Aorta (tissue), 5 donors: ENCODE measurements at regions of chr10 and their contacts with region 1.

Region 1: GRCh38 chr10:58781873-58782488 is 269.3 kb downstream of the BICC1 start:
- DNase-seq: no peak
- ATAC-seq: peak; percentile 54
- H3K4me3 ChIP-seq: no peak overlapping the region
- H3K27ac ChIP-seq: no peak overlapping the region
- H3K4me1 ChIP-seq: no peaks in the 10 kb centered on the region
- H3K27me3 ChIP-seq: no peaks in the 10 kb centered on the region

Region 2: GRCh38 chr10:58414270-58415041 is 367.5 kb before region 1 on chr10:
- intact Hi-C with region 1: loop called in 1 of 2 experiments (anchors 10 kb)
- DNase-seq: no peak
- ATAC-seq: peak; percentile 78
- H3K4me3 ChIP-seq: no peak overlapping the region
- H3K27ac ChIP-seq: no peak overlapping the region
- H3K4me1 ChIP-seq: no peaks in the 10 kb centered on the region
- H3K27me3 ChIP-seq: no peaks in the 10 kb centered on the region

Region 3: GRCh38 chr10:58577437-58577777 is 204.6 kb before region 1 on chr10:
- intact Hi-C with region 1: no loop called
- DNase-seq: no peak
- ATAC-seq: peak; percentile 75
- H3K4me3 ChIP-seq: no peak overlapping the region
- H3K27ac ChIP-seq: peak overlapping the region; percentile 2 to 23
- H3K4me1 ChIP-seq: peaks cover 5 to 6% of the 10 kb centered on the region in 2 donors
- H3K27me3 ChIP-seq: no peaks in the 10 kb centered on the region

Region 4: DNA sequence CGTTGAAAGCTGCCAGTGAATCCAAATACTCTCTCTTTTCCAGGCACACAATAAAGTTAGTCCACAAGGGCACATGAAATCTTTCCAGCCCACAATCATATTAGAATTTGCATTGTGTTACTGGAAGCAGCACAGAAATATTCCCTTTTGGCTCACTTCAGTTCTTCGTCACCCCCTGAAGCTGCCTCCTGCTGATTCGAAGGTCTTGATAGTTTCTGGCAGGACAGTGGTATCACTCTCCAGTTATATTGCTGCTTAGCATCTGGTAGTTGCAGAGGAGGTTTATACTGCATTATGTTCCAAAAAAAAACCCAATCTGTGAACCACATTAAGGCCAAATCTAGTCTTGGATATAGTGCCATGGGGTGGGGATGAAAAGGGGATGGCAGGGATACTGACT is 16.1 kb before region 1 on chr10:
- intact Hi-C with region 1: no loop called
- DNase-seq: no peak
- ATAC-seq: no peak
- H3K4me3 ChIP-seq: no peak overlapping the region
- H3K27ac ChIP-seq: no peak overlapping the region
- H3K4me1 ChIP-seq: no peaks in the 10 kb centered on the region
- H3K27me3 ChIP-seq: no peaks in the 10 kb centered on the region

Region 5: DNA sequence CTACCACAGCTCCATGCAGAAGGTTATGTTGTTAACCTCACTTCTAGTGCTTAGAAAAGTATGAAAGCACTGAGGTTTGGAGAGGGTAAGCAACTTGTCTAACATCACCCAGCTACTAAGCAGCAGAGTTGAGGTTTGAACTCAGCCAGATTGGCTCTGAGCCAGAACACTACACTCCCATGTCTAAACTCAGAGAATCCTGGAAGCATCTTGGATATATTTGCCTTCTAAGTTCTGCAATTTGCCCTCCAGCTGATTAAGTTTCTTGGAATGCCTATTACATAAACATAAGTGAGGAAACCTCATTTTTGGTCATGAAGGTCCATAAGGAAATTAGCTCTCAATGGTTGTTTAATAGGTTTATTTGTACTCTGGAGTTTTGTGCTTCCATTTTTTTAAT is 316.4 kb after region 1 on chr10:
- intact Hi-C with region 1: loop called in 1 of 2 experiments (anchors 10 kb)
- DNase-seq: peak in 1 of 2 donors; percentile 45
- ATAC-seq: peak; percentile 53
- H3K4me3 ChIP-seq: no peak overlapping the region
- H3K27ac ChIP-seq: no peak overlapping the region
- H3K4me1 ChIP-seq: peaks cover 6% of the 10 kb centered on the region in 2 donors
- H3K27me3 ChIP-seq: no peaks in the 10 kb centered on the region

Region 6: DNA sequence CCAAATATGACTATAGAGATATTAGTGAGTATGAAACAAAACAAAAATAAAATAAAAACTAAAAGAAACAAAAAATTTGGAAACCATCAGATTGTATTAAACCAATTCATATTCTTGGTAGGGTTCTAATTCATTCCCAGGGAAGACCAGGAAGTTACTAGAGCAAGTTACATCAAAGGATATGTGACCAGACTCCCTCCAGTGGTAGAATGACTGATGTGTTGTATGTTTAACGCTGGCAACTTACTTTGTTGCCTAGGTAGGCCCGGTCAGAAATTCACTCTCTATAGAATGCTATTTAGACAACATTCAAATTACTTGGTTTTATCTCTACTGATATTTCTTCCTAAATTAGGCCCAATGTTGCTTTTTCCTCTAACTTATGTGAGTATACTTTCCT is 399.7 kb after region 1 on chr10:
- intact Hi-C with region 1: loop called in 1 of 2 experiments (anchors 10 kb)
- DNase-seq: no peak
- ATAC-seq: no peak
- H3K4me3 ChIP-seq: no peak overlapping the region
- H3K27ac ChIP-seq: no peak overlapping the region
- H3K4me1 ChIP-seq: peaks cover 0 to 1% of the 10 kb centered on the region in 2 donors
- H3K27me3 ChIP-seq: no peaks in the 10 kb centered on the region

Region 7: GRCh38 chr10:59234816-59235429 is 452.9 kb after region 1 on chr10:
- intact Hi-C with region 1: loop called (anchors 10 kb)
- DNase-seq: no peak
- ATAC-seq: no peak
- H3K4me3 ChIP-seq: no peak overlapping the region
- H3K27ac ChIP-seq: no peak overlapping the region
- H3K4me1 ChIP-seq: no peaks in the 10 kb centered on the region
- H3K27me3 ChIP-seq: no peaks in the 10 kb centered on the region